Calu3 (cell line): ENCODE measurements at regions of chr9 and their contacts with region 1.

Region 1: GRCh38 chr9:33159760-33160127 is 7.4 kb downstream of the B4GALT1 start:
- DNase-seq: no peak
- H3K4me3 Mint-ChIP-seq: peak overlapping the region; percentile 58
- H3K27ac Mint-ChIP-seq: peak overlapping the region; percentile 96
- H3K4me1 Mint-ChIP-seq: peaks cover 66% of the 10 kb centered on the region
- H3K27me3 Mint-ChIP-seq: no peaks in the 10 kb centered on the region
- CTCF ChIP-seq: no peak

Region 2: GRCh38 chr9:33081128-33081851 is 78.5 kb before region 1 on chr9:
- CTCF ChIA-PET with region 1: no interaction called
- intact Hi-C with region 1: loop called (anchors 5 kb)
- DNase-seq: peak; percentile 36
- H3K4me3 Mint-ChIP-seq: no peak overlapping the region
- H3K27ac Mint-ChIP-seq: no peak overlapping the region
- H3K4me1 Mint-ChIP-seq: no peaks in the 10 kb centered on the region
- H3K27me3 Mint-ChIP-seq: no peaks in the 10 kb centered on the region
- CTCF ChIP-seq: peak; percentile 39